ENCODE measurements at regions of chr19 and their contacts with region 1.

Region 1: GRCh38 chr19:38245826-38246498 is 10.2 kb downstream of the PPP1R14A start:
- DNase-seq: no peak
- ATAC-seq: no peak

Region 2: GRCh38 chr19:38277969-38278680 is 32.2 kb after region 1 on chr19:
- intact Hi-C with region 1: no loop called
- DNase-seq: no peak
- ATAC-seq: peak; percentile 82

Region 3: DNA sequence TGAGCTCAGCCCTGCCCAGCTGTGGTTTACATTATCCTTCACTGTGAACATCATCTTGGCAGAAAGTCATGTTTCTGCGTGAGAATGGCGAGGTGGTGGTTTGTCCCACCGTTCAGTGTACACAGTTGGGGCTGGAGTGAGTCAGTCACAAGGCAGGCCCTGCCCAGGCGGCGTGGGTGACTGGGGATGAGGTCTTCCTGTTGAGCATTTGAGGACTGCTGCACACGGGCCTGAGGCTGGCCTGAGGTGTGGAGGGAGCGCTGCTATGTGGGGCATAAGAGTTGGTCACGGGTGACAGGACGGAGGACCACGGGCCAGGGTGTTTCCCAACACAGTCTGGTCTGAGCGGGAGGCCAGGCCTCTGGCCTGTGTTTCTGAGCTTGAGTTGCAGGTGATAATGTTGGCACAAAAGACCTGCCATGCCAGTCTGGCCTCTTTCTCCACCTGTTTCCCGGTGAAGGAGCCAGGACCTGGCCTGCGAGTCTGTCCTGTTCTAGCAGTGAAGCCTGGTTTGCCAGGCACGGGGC is 44.7 kb after region 1 on chr19:
- intact Hi-C with region 1: no loop called
- DNase-seq: no peak
- ATAC-seq: no peak

Region 4: DNA sequence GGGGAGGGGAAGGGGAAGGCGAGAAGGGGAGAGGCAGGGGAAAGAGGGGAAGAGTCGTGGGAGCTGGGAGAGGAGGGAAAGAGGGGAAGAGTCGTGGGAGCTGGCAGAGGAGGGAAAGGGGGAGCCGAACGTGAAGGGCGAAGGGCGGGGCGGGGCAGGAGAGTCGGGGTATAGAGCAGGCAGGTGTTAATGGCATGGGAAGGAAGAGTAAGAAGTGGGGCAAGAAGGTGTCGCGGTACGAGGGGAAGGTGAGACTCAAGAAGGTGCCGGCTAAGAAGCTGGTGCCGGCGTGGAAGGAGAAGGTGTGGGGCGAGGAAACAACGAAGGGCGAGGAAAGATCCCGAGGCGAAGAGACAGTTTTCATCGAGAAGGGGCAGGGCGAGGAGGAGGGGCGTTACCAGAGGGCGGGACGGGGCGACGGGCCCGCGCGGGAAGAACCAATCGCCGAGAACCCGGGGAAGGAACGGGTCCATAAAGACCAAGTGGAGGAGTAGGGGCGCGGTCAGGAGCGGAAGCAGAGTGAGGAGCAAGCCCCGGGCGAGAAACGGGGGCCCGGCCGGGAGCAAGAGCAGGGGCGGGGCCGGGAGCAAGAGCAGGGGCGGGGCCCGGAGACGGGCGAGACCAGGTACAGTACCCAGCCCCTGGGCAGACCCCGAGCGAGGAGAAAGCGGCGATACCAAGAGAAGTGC is 90.1 kb after region 1 on chr19:
- intact Hi-C with region 1: loop called (anchors 1 kb)
- DNase-seq: peak; percentile 97
- ATAC-seq: peak; percentile 93

Region 5: DNA sequence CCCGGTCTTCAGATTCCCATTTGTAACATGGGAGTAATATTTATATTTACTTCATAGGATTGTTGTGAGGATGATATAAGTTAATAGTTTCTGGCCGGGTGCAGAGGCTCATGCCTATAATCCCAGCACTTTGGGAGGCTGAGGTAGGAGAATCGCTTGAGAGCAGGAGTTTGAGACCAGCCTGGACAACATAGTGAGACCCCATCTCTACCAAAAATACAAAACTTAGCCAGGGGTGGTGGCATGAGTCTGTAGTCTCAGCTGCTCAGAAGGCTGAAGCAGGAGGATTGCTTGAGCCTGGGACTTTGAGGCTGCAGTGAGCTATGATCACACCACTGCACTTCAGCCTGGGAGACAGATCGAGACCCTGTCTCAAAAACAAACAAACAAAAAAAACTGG is 100.9 kb after region 1 on chr19:
- intact Hi-C with region 1: no loop called
- DNase-seq: no peak
- ATAC-seq: no peak